Activated B cell treated with CpG ODN at 0.5 μM for 24 hours (primary cell): ENCODE measurements at regions of chr5 and their contacts with region 1.

Region 1: DNA sequence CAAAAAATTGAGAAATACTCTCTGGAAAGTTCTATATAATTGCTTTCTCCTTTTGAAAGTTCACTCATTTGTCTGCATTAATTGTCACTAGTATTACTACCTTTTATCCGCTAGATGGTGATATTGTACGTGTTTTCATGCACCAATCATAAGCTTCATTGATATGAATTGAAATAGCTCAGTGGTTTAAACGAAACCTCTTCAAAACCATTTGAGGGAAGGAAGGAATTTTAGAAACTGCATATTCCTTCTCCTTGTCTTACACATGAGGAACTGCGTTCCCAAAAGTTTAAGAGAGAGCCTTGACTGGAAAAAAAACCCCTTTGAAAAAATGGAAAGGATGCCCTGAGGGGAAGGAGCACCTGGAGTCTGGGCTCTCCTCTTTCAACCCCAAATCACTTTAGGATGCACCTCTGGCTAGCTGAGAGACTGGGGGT is 98.6 kb downstream of the YTHDC2 start:
- DNase-seq: no peak
- ATAC-seq: peak; percentile 52
- H3K4me3 Mint-ChIP-seq: no peak overlapping the region
- H3K27ac Mint-ChIP-seq: no peak overlapping the region
- H3K4me1 Mint-ChIP-seq: no peaks in the 10 kb centered on the region
- H3K27me3 Mint-ChIP-seq: peaks cover 24% of the 10 kb centered on the region
- CTCF ChIP-seq: no peak

Region 2: DNA sequence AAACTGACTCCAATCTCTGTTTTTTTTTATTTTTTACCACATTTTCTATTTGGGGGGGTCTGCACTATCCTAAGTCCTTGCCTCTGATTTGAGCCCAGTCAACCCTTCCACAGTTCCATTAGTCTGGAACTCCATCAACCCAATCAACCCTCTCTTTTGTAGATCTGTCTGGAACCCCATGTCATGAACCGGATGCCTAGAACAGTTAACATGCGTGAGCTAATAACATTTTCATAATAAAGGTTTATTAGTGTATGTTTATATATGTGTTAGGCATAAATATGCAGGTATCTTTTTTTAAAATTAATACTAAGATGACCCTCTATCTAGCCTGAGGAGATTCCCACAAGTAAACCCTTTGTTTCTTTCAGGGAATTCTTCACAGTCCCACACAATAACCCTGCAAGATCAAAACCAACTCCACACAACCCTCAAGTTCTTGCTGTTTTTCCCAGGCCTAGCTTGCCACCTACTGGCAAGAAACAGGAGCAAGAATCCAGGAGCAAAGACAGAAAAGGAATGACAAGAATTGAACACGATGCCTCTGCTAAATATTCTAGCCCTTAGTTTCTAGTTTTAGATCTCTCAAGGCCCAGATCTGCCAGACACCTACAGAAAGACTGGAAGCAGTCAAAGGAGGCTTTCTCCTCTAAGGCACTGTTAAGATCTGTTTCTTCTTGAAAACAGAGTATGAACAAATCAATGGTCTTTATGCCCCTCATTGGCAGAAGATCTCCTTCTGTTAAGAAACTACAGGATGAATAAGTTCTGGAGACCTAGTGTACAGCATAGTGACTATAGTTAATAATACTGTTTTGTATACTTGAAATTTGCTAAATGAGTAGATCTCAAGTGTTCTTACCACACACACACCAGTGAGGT is 1457.2 kb after region 1 on chr5:
- CTCF ChIA-PET with region 1: interaction called, 11 read pairs
- POLR2A ChIA-PET with region 1: no interaction called
- intact Hi-C with region 1: no loop called
- DNase-seq: no peak
- ATAC-seq: peak; percentile 51
- H3K4me3 Mint-ChIP-seq: peak overlapping the region; percentile 6
- H3K27ac Mint-ChIP-seq: peak overlapping the region; percentile 71
- H3K4me1 Mint-ChIP-seq: peaks cover 28% of the 10 kb centered on the region
- H3K27me3 Mint-ChIP-seq: peaks cover 2% of the 10 kb centered on the region
- CTCF ChIP-seq: no peak